Activated T-helper 2 cell treated with anti-CD3 and anti-CD28 coated beads, Interferon-gamma antibody, Interleukin-2, Interleukin-4, amounts not matched to agents 10 μg/mL and 5 μg/mL and 100 μg/mL, durations not matched to agents 14 hours and 24 hours and 36 hours (primary cell): ENCODE measurements at regions of chr18 and their contacts with region 1.

Region 1: GRCh38 chr18:32530947-32531651 is 60.4 kb upstream of the GAREM1 start:
- DNase-seq: peak; percentile 16
- H3K4me3 Mint-ChIP-seq: no peak overlapping the region
- H3K27ac Mint-ChIP-seq: no peak overlapping the region
- H3K4me1 Mint-ChIP-seq: peaks cover 12% of the 10 kb centered on the region
- H3K27me3 Mint-ChIP-seq: peaks cover 29% of the 10 kb centered on the region

Region 2: GRCh38 chr18:32301976-32302743 is 228.9 kb before region 1 on chr18:
- intact Hi-C with region 1: loop called (anchors 1 kb)
- DNase-seq: no peak
- H3K4me3 Mint-ChIP-seq: no peak overlapping the region
- H3K27ac Mint-ChIP-seq: no peak overlapping the region
- H3K4me1 Mint-ChIP-seq: peaks cover 7% of the 10 kb centered on the region
- H3K27me3 Mint-ChIP-seq: peaks cover 18% of the 10 kb centered on the region